ENCODE measurements at regions of chr17 and their contacts with region 1.

Region 1: GRCh38 chr17:8393420-8394241 is 4.0 kb downstream of the RNF222 start:
- DNase-seq: peak in 34 of 35 experiments; percentile 22 to 79 (median 48)
- ATAC-seq: peak; percentile 88 to 100 (median 96)
- H3K4me3 ChIP-seq: no peak overlapping the region
- H3K4me3 Mint-ChIP-seq: peak overlapping the region in 1 of 3 donors; percentile 56
- H3K27ac ChIP-seq: peak overlapping the region; percentile 69
- H3K27ac Mint-ChIP-seq: peak overlapping the region; percentile 80 to 83
- H3K4me1 ChIP-seq: peaks cover 6 to 34% of the 10 kb centered on the region in 2 experiments
- H3K4me1 Mint-ChIP-seq: peaks cover 12 to 18% (median 15%) of the 10 kb centered on the region in 3 donors
- H3K27me3 ChIP-seq: peaks cover 0 to 20% of the 10 kb centered on the region in 2 experiments
- H3K27me3 Mint-ChIP-seq: peaks cover 0 to 17% of the 10 kb centered on the region in 2 donors

Region 2: DNA sequence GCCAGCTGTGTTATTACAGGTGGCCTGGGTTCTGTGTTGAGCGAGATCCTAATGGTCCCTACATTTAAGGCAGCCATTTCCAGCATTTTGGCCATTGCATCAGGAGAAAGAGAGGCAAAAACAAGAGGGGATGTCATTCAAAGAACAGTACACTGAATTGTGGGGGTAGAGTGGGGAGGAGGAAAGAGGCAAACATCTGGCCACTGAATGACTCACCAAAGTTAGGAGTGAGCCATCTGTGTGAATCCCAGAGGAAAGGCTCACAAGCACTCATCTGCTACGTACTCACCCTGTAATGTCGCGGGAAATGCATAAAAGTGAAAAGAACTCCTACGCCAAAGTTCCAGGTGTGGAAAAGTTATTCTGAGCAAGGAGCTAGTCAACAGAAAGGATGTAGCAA is 33.9 kb before region 1 on chr17:
- CTCF ChIA-PET with region 1: no interaction called
- POLR2A ChIA-PET with region 1: no interaction called
- DNase-seq: no peak
- ATAC-seq: no peak
- H3K4me3 ChIP-seq: no peak overlapping the region
- H3K4me3 Mint-ChIP-seq: no peak overlapping the region
- H3K27ac ChIP-seq: no peak overlapping the region
- H3K27ac Mint-ChIP-seq: no peak overlapping the region
- H3K4me1 ChIP-seq: no peaks in the 10 kb centered on the region
- H3K4me1 Mint-ChIP-seq: peaks cover 11 to 19% (median 13%) of the 10 kb centered on the region in 3 donors
- H3K27me3 ChIP-seq: no peaks in the 10 kb centered on the region
- H3K27me3 Mint-ChIP-seq: no peaks in the 10 kb centered on the region

Region 3: GRCh38 chr17:8383143-8383822 is 10.3 kb before region 1 on chr17 and contains the start of gene RPL26:
- CTCF ChIA-PET with region 1: interaction called in 1 of 2 experiments, 10 read pairs
- POLR2A ChIA-PET with region 1: interaction called in 1 of 2 experiments, 5 read pairs
- DNase-seq: peak; percentile 87 to 97 (median 94)
- ATAC-seq: peak; percentile 89 to 93 (median 92)
- H3K4me3 ChIP-seq: peak within 1 kb of the TSS; percentile 75 to 96
- H3K4me3 Mint-ChIP-seq: peak within 1 kb of the TSS; percentile 89 to 100 (median 100)
- H3K27ac ChIP-seq: peak within 1 kb of the TSS; percentile 63
- H3K27ac Mint-ChIP-seq: peak within 1 kb of the TSS; percentile 90 to 95
- H3K4me1 ChIP-seq: peaks cover 20 to 53% of the 10 kb centered on the region in 2 experiments
- H3K4me1 Mint-ChIP-seq: peaks cover 59 to 76% (median 64%) of the 10 kb centered on the region in 3 donors
- H3K27me3 ChIP-seq: no peaks in the 10 kb centered on the region
- H3K27me3 Mint-ChIP-seq: no peaks in the 10 kb centered on the region
- total RNA-seq, gene RPL26: 2,515 to 2,978 (median 2,612) TPM

Region 4: DNA sequence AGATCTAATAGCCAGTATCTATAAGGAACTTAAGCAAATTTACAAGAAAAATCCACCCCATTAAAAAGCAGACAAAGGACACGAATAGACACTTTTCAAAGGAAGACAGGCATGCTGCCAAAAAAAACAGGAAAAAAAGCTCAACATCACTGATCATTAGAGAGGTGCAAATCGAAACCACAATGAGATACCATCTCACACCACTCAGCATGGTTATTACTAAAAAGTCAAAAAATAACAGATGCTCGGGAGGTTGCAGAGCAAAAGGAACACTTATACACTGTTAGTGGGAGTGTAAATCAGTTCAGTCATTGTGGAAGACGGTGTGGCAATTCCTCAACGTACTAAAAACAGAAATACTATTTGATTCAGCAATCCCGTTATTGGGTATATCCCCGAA is 1172.4 kb after region 1 on chr17:
- CTCF ChIA-PET with region 1: no interaction called
- POLR2A ChIA-PET with region 1: interaction called in 1 of 2 experiments, 10 read pairs
- DNase-seq: peak in 1 of 35 experiments; percentile 41
- ATAC-seq: peak in 3 of 4 experiments; percentile 40 to 60 (median 55)
- H3K4me3 ChIP-seq: peak overlapping the region in 1 of 2 donors; percentile 24
- H3K4me3 Mint-ChIP-seq: peak overlapping the region; percentile 59 to 71 (median 59)
- H3K27ac ChIP-seq: peak overlapping the region; percentile 41
- H3K27ac Mint-ChIP-seq: peak overlapping the region; percentile 84 to 88
- H3K4me1 ChIP-seq: peaks cover 0 to 11% of the 10 kb centered on the region in 2 experiments
- H3K4me1 Mint-ChIP-seq: peaks cover 42 to 50% (median 47%) of the 10 kb centered on the region in 3 donors
- H3K27me3 ChIP-seq: no peaks in the 10 kb centered on the region
- H3K27me3 Mint-ChIP-seq: no peaks in the 10 kb centered on the region